ENCODE measurements at regions of chr3 and their contacts with region 1.

Region 1: GRCh38 chr3:106428565-106428994 is 559.8 kb upstream of the CBLB start:
- DNase-seq: no peak
- H3K4me3 Mint-ChIP-seq: no peak overlapping the region
- H3K27ac Mint-ChIP-seq: peak overlapping the region; percentile 93
- H3K4me1 Mint-ChIP-seq: peaks cover 44% of the 10 kb centered on the region
- H3K27me3 Mint-ChIP-seq: no peaks in the 10 kb centered on the region

Region 2: GRCh38 chr3:105676621-105677300 is 751.8 kb before region 1 on chr3:
- intact Hi-C with region 1: loop called (anchors 1 kb)
- DNase-seq: no peak
- H3K4me3 Mint-ChIP-seq: no peak overlapping the region
- H3K27ac Mint-ChIP-seq: peak overlapping the region; percentile 74
- H3K4me1 Mint-ChIP-seq: peaks cover 23% of the 10 kb centered on the region
- H3K27me3 Mint-ChIP-seq: no peaks in the 10 kb centered on the region

Region 3: GRCh38 chr3:105752744-105753415 is 675.7 kb before region 1 on chr3:
- intact Hi-C with region 1: loop called (anchors 1 kb)
- DNase-seq: peak; percentile 39
- H3K4me3 Mint-ChIP-seq: peak overlapping the region; percentile 48
- H3K27ac Mint-ChIP-seq: peak overlapping the region; percentile 95
- H3K4me1 Mint-ChIP-seq: peaks cover 70% of the 10 kb centered on the region
- H3K27me3 Mint-ChIP-seq: no peaks in the 10 kb centered on the region

Region 4: DNA sequence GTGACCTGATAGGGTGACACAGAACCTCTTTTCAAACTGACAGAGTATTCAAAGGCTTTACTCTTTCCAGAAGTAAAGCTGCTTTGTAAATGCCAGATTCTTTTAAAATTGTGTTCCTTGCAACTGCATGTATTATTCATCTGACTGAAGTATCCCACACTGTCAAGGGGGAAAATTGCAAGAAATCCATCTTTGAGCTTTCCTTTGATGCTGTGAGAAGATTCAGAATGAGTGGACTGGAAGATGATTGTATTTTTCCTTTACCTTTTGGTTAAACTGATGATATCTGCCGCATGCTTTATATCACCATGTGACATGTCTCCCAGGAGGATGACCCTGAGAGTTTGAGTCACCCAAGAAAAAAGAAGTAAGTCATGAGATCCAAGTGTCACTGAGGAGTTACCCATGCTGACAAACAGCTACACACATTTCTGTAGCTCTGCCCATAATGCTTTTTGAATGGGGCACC is 308.9 kb before region 1 on chr3:
- intact Hi-C with region 1: loop called (anchors 2 kb)
- DNase-seq: no peak
- H3K4me3 Mint-ChIP-seq: no peak overlapping the region
- H3K27ac Mint-ChIP-seq: peak overlapping the region; percentile 80
- H3K4me1 Mint-ChIP-seq: peaks cover 23% of the 10 kb centered on the region
- H3K27me3 Mint-ChIP-seq: no peaks in the 10 kb centered on the region

Region 5: GRCh38 chr3:106215047-106215446 is 213.5 kb before region 1 on chr3:
- intact Hi-C with region 1: loop called (anchors 10 kb)
- DNase-seq: no peak
- H3K4me3 Mint-ChIP-seq: peak overlapping the region; percentile 19
- H3K27ac Mint-ChIP-seq: peak overlapping the region; percentile 79
- H3K4me1 Mint-ChIP-seq: peaks cover 47% of the 10 kb centered on the region
- H3K27me3 Mint-ChIP-seq: no peaks in the 10 kb centered on the region

Region 6: GRCh38 chr3:106452096-106452495 is 23.5 kb after region 1 on chr3:
- intact Hi-C with region 1: no loop called
- DNase-seq: no peak
- H3K4me3 Mint-ChIP-seq: no peak overlapping the region
- H3K27ac Mint-ChIP-seq: no peak overlapping the region
- H3K4me1 Mint-ChIP-seq: peaks cover 9% of the 10 kb centered on the region
- H3K27me3 Mint-ChIP-seq: no peaks in the 10 kb centered on the region

Region 7: DNA sequence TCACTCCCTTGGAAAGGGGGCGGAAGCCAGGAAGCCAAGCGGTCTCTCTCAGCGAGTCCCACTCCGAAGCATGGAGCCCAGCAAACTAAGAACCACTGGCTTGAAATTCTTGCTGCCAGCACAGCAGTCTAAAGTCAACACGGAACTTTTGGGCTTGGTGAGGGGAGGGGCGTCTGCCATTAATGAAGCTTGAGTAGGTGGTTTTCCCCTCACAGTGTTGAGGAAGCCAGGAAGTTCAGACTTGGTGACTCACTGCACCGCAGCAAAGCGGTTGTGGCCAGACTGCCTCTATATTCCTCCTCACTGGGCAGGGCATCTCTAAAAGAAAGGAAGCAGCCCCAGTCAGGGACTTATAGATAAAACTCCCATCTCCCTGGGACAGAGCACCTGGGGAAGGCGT is 105.6 kb after region 1 on chr3:
- intact Hi-C with region 1: loop called (anchors 1 kb)
- DNase-seq: peak; percentile 26
- H3K4me3 Mint-ChIP-seq: no peak overlapping the region
- H3K27ac Mint-ChIP-seq: peak overlapping the region; percentile 14
- H3K4me1 Mint-ChIP-seq: peaks cover 16% of the 10 kb centered on the region
- H3K27me3 Mint-ChIP-seq: no peaks in the 10 kb centered on the region

Region 8: DNA sequence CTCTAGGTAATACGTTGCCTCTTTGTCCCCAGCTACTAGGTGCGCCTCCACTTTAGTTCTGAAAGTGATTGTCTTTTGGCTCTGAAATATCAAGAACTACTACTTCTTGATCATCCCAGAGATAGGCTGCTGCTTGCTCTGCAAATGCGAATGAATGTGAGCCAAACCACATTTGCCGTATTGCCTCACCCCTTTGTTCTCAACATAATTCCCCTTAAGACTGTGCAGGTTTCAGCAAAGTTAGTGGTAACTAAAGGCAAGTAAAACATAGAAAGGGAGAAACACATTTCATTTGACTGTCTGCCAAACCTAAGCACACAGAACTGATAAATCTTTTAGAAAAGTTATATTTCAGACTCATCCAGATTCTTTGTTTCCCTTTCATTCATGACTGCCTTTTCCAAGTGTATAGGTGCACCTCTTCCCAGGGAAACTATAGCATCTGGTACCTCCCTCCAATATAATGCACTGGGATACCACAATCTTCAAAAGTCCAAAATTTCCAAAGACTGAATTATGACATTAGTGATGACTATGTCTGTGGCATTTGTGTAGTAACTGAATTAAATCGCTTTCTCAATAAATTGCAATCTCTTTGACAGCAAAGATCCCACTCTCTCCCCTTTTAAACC is 160.8 kb after region 1 on chr3:
- intact Hi-C with region 1: loop called (anchors 2 kb)
- DNase-seq: no peak
- H3K4me3 Mint-ChIP-seq: no peak overlapping the region
- H3K27ac Mint-ChIP-seq: peak overlapping the region; percentile 55
- H3K4me1 Mint-ChIP-seq: peaks cover 16% of the 10 kb centered on the region
- H3K27me3 Mint-ChIP-seq: no peaks in the 10 kb centered on the region

Measured in activated T-helper 2 cell treated with anti-CD3 and anti-CD28 coated beads, Interferon-gamma antibody, Interleukin-2, Interleukin-4, amounts not matched to agents 10 μg/mL and 5 μg/mL and 100 μg/mL, durations not matched to agents 14 hours and 24 hours and 36 hours (primary cell).